ENCODE measurements at regions of chr18 and their contacts with region 1.

Region 1: GRCh38 chr18:23515911-23516546 is 12.7 kb downstream of the RMC1 start:
- DNase-seq: peak; percentile 83
- H3K4me3 Mint-ChIP-seq: no peak overlapping the region
- H3K27ac Mint-ChIP-seq: peak overlapping the region; percentile 25
- H3K4me1 Mint-ChIP-seq: peaks cover 33% of the 10 kb centered on the region
- H3K27me3 Mint-ChIP-seq: no peaks in the 10 kb centered on the region

Region 2: GRCh38 chr18:23540867-23541266 is 24.8 kb after region 1 on chr18:
- CTCF ChIA-PET with region 1: interaction called, 13 read pairs
- DNase-seq: peak; percentile 43
- H3K4me3 Mint-ChIP-seq: peak overlapping the region; percentile 57
- H3K27ac Mint-ChIP-seq: peak overlapping the region; percentile 90
- H3K4me1 Mint-ChIP-seq: peaks cover 46% of the 10 kb centered on the region
- H3K27me3 Mint-ChIP-seq: no peaks in the 10 kb centered on the region

Region 3: GRCh38 chr18:23586249-23587196 is 70.5 kb after region 1 on chr18 and contains the start of gene NPC1:
- CTCF ChIA-PET with region 1: interaction called, 20 read pairs
- DNase-seq: peak; percentile 95
- H3K4me3 Mint-ChIP-seq: peak within 1 kb of the TSS; percentile 93
- H3K27ac Mint-ChIP-seq: peak within 1 kb of the TSS; percentile 97
- H3K4me1 Mint-ChIP-seq: peaks cover 42% of the 10 kb centered on the region
- H3K27me3 Mint-ChIP-seq: peaks cover 32% of the 10 kb centered on the region

Region 4: GRCh38 chr18:23703057-23703986 is 187.3 kb after region 1 on chr18:
- CTCF ChIA-PET with region 1: interaction called, 11 read pairs
- DNase-seq: peak; percentile 44
- H3K4me3 Mint-ChIP-seq: no peak overlapping the region
- H3K27ac Mint-ChIP-seq: no peak overlapping the region
- H3K4me1 Mint-ChIP-seq: no peaks in the 10 kb centered on the region
- H3K27me3 Mint-ChIP-seq: peaks cover 42% of the 10 kb centered on the region

Measured in activated naive CD4-positive, alpha-beta T cell treated with anti-CD3 and anti-CD28 coated beads, Interleukin-2, amount 10 ng/mL, durations not matched to agents 7 days and 5 days (primary cell).